Dorsolateral prefrontal cortex (tissue), 120 donors: ENCODE measurements at regions of chr16 and their contacts with region 1.

Region 1: GRCh38 chr16:30922960-30923535 is 324 bp upstream of the FBXL19 start:
- DNase-seq: peak; percentile 98 to 100 (median 100)
- H3K4me3 ChIP-seq: peak overlapping the region; percentile 47 to 88 (median 75)
- H3K27ac ChIP-seq: peak overlapping the region; percentile 93 to 100 (median 98)
- H3K27me3 ChIP-seq: no peaks in the 10 kb centered on the region
- CTCF ChIP-seq: peak in 1 of 56 donors; percentile 1

Region 2: GRCh38 chr16:30698139-30698815 is 224.8 kb before region 1 on chr16:
- intact Hi-C with region 1: loop called in 1 of 2 experiments (anchors 10 kb)
- DNase-seq: peak; percentile 68 to 98 (median 82)
- H3K4me3 ChIP-seq: peak overlapping the region; percentile 76 to 100 (median 96)
- H3K27ac ChIP-seq: peak overlapping the region; percentile 99 to 100 (median 100)
- H3K27me3 ChIP-seq: no peaks in the 10 kb centered on the region
- CTCF ChIP-seq: peak in 17 of 56 donors; percentile 1 to 52 (median 12)

Region 3: DNA sequence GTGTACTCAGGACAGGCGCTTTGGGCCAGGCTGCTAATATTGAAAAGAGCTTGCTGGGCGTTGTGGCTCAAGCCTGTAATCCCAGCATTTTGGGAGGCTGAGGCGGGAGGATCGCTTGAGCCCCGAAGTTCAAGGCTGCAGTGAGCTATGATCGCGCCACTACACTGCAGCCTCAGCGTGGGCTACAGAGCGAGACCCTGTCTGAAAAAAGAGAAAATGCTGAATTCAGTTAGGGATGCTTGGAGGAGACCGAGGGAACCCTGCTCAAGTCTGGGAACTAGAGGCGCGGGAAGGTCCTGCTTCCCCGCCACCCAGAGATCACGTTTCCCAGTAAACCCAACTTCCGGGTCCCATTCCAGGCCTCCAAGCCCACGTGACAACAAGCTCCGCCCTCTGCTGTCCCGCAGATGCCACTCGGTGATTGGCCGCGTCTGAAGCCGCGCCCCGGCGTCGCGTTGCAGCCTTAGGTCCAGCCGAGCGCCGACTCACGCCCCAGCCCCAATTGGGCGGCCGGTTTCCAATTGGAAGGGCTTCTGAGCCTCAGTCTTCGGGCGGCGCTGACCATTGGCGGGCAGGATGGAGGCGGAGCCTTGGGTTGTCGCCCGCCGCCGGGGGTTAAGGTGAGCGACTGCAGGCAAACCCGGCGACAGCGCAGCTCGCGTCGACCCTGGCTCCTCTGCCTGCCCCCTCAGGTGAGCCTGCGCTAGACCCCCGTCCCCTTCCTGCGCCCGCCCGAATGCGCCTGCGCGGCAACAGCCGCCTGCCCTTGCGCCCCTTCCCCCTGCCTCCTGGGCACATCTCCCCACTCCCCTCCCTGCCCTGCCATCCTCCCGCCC is 175.0 kb before region 1 on chr16 and contains the start of gene PHKG2:
- intact Hi-C with region 1: no loop called
- DNase-seq: peak; percentile 98 to 100 (median 99)
- H3K4me3 ChIP-seq: peak within 1 kb of the TSS; percentile 58 to 97 (median 80)
- H3K27ac ChIP-seq: peak within 1 kb of the TSS in 55 of 59 donors; percentile 3 to 88 (median 75)
- H3K27me3 ChIP-seq: no peaks in the 10 kb centered on the region
- CTCF ChIP-seq: peak in 33 of 56 donors; percentile 7 to 61 (median 34)
- total RNA-seq, gene PHKG2: 25.1 to 55.2 (median 38.8) TPM

Region 4: GRCh38 chr16:30805370-30806169 is 117.5 kb before region 1 on chr16:
- intact Hi-C with region 1: loop called in 1 of 2 experiments (anchors 5 kb)
- DNase-seq: peak; percentile 78 to 94 (median 88)
- H3K4me3 ChIP-seq: peak overlapping the region; percentile 63 to 99 (median 88)
- H3K27ac ChIP-seq: peak overlapping the region; percentile 70 to 98 (median 92)
- H3K27me3 ChIP-seq: no peaks in the 10 kb centered on the region
- CTCF ChIP-seq: peak in 47 of 56 donors; percentile 12 to 63 (median 41)

Region 5: GRCh38 chr16:30874821-30875717 is 48.0 kb before region 1 on chr16:
- intact Hi-C with region 1: loop called in 1 of 2 experiments (anchors 10 kb)
- DNase-seq: peak; percentile 83 to 94 (median 92)
- H3K4me3 ChIP-seq: peak overlapping the region; percentile 56 to 99 (median 91)
- H3K27ac ChIP-seq: peak overlapping the region; percentile 28 to 97 (median 90)
- H3K27me3 ChIP-seq: no peaks in the 10 kb centered on the region
- CTCF ChIP-seq: peak in 40 of 56 donors; percentile 4 to 65 (median 26)

Region 6: GRCh38 chr16:30902029-30902972 is 20.7 kb before region 1 on chr16:
- intact Hi-C with region 1: loop called (anchors 1 to 2 kb)
- DNase-seq: peak in 5 of 10 donors; percentile 43 to 82 (median 47)
- H3K4me3 ChIP-seq: peak overlapping the region; percentile 47 to 74 (median 63)
- H3K27ac ChIP-seq: peak overlapping the region; percentile 71 to 97 (median 93)
- H3K27me3 ChIP-seq: no peaks in the 10 kb centered on the region
- CTCF ChIP-seq: peak in 17 of 56 donors; percentile 11 to 52 (median 18)

Region 7: DNA sequence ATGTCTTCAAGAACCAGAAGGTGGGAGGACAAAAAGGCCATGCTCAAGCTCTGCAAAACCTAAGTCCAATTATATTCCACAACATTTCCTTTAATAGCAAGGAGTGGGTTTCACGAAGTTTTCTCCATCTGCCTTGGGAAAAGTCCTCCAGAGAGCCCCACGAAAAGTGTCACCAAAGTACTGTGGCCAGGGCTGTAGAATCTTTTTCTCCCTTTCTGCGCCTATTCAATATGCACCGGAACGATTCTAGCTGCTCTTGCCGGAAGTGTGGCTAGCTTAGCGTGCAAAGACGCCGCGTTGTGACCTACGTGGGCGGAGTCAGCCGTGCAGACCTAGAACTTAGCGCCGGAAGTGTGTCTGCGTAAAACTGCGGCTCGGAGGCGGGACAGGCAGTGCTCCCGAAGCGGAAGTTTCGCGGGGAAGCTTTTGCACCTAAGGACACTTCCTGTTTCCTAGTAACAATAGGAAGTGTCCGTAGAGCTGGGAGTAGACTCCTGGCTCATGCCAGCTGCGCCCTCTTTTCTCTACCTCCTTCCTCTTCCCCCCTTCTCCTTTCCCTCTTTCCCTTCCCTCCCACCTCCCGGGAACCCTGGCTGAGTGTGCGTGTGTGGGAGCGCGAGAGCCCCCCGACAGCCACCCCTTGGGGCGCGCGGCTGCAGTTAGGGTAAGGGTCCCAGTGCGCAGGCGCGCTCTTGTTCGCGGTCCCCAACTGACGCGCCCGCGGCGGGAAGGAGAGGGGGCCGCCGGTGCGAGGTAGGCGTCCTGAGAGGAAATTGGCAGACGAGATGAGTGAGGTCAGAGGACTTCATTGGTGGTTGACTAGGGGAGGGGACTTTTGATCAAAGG is 151.1 kb after region 1 on chr16 and contains the starts of genes ZNF646 and ZNF668:
- intact Hi-C with region 1: no loop called
- DNase-seq: peak; percentile 98 to 100 (median 99)
- H3K4me3 ChIP-seq: peak within 1 kb of the TSS; percentile 74 to 99 (median 95)
- H3K27ac ChIP-seq: peak within 1 kb of the TSS; percentile 78 to 98 (median 95)
- H3K27me3 ChIP-seq: no peaks in the 10 kb centered on the region
- CTCF ChIP-seq: peak in 27 of 56 donors; percentile 5 to 44 (median 20)
- total RNA-seq, gene ZNF646: 11.2 to 24.3 (median 16.7) TPM
- total RNA-seq, gene ZNF668: 7.9 to 24.5 (median 12.5) TPM